Esophagus squamous epithelium (tissue), 5 donors: ENCODE measurements at regions of chrX and their contacts with region 1.

Region 1: GRCh38 chrX:109485470-109486340 is 3.8 kb upstream of the GUCY2F start:
- DNase-seq: peak; percentile 10
- H3K4me3 ChIP-seq: no peak overlapping the region
- H3K27ac ChIP-seq: no peak overlapping the region
- H3K4me1 ChIP-seq: no peaks in the 10 kb centered on the region
- H3K27me3 ChIP-seq: peaks cover 0 to 4% (median 0%) of the 10 kb centered on the region in 4 donors
- CTCF ChIP-seq: peak; percentile 84 to 96 (median 90)
- POLR2A ChIP-seq: no peak

Region 2: GRCh38 chrX:109511113-109511512 is 25.4 kb after region 1 on chrX:
- intact Hi-C with region 1: no loop called
- DNase-seq: no peak
- H3K4me3 ChIP-seq: no peak overlapping the region
- H3K27ac ChIP-seq: no peak overlapping the region
- H3K4me1 ChIP-seq: no peaks in the 10 kb centered on the region
- H3K27me3 ChIP-seq: no peaks in the 10 kb centered on the region
- CTCF ChIP-seq: no peak
- POLR2A ChIP-seq: no peak

Region 3: GRCh38 chrX:109600237-109600651 is 114.5 kb after region 1 on chrX:
- intact Hi-C with region 1: no loop called
- DNase-seq: no peak
- H3K4me3 ChIP-seq: no peak overlapping the region
- H3K27ac ChIP-seq: no peak overlapping the region
- H3K4me1 ChIP-seq: no peaks in the 10 kb centered on the region
- H3K27me3 ChIP-seq: peaks cover 0 to 7% (median 0%) of the 10 kb centered on the region in 4 donors
- CTCF ChIP-seq: no peak
- POLR2A ChIP-seq: no peak

Region 4: GRCh38 chrX:109635176-109635575 is 149.5 kb after region 1 on chrX:
- intact Hi-C with region 1: loop called (anchors 10 kb)
- DNase-seq: no peak
- H3K4me3 ChIP-seq: no peak overlapping the region
- H3K27ac ChIP-seq: no peak overlapping the region
- H3K4me1 ChIP-seq: no peaks in the 10 kb centered on the region
- H3K27me3 ChIP-seq: no peaks in the 10 kb centered on the region
- CTCF ChIP-seq: peak in 4 of 6 experiments; percentile 9 to 46 (median 24)
- POLR2A ChIP-seq: no peak

Region 5: DNA sequence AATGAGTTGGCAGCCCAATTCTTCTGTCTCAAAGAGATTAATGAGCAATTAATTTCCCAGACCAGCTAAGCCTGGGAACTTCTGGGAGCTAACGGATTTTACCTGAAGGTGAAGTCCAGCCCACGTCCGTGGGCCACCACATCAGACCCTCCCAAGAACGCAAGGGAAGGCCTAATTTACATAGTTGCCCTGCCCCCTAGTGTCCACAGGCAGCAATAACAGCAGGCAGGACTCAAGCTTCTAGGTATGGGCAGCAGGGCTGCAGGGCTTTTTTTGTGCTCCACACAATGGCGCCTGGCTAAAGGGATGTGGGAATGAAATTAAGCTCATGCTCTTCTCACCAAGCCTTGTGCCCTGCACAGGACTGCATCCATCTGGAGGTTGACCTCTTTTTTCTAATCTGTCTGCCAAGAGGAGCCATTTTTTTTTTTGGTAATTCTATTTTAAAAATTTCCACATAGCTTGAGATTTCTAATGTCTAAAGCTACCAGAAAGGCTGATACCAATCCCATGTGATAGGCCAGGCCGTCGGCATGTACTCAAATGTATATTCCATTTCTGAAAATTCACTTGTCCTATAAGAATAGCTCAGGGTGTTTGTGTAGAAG is 405.3 kb after region 1 on chrX:
- intact Hi-C with region 1: loop called (anchors 5 kb)
- DNase-seq: no peak
- H3K4me3 ChIP-seq: no peak overlapping the region
- H3K27ac ChIP-seq: no peak overlapping the region
- H3K4me1 ChIP-seq: no peaks in the 10 kb centered on the region
- H3K27me3 ChIP-seq: peaks cover 0 to 3% (median 0%) of the 10 kb centered on the region in 4 donors
- CTCF ChIP-seq: peak; percentile 57 to 88 (median 72)
- POLR2A ChIP-seq: no peak